ENCODE measurements at regions of chr17 and their contacts with region 1.

Region 1: DNA sequence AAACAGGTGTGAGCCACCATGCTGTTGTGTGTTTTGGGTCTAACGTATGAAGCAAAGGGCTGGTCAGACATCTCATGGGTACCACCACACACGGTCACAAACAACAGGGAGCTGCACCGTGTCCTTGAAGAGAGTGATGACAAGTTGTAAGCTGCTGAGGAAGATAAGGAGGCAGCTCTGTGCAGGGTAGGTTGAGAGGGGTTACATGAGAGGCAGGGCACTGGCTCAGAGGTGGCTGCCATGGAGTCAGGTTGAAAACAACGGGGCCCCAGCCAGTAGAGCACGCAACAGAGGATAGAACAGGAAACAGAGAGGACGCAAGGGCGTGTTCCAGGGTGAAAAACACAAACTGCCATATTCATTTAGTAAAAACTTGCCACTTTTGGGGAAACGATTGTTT is 52.2 kb downstream of the TRARG1 start:
- DNase-seq: no peak
- H3K4me3 ChIP-seq: no peak overlapping the region
- CTCF ChIP-seq: no peak
- POLR2A ChIP-seq: no peak

Region 2: DNA sequence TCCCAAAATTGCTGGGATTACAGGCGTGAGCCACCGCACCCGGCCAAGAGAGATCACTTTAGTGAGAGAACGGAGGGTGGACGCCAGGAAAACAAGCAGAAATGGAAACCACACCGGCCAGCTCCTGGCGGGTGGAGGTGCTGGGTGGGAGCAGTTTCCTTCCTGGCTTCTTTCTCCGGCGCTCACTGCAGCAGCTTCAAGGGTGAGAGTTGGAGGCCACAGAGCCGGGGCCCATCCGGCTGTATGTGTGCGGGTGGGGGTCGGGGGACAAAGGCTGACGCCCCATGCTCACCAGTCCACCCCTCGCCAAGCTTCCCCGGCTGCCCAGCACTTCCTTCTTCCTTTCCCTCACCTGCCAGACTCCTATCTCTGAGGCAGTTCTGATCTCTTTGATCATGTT is 75.0 kb before region 1 on chr17:
- intact Hi-C with region 1: loop called (anchors 5 kb)
- DNase-seq: no peak
- H3K4me3 ChIP-seq: no peak overlapping the region
- CTCF ChIP-seq: no peak
- POLR2A ChIP-seq: no peak